Left colon (tissue), 2 donors: ENCODE measurements at regions of chr15 and their contacts with region 1.

Region 1: GRCh38 chr15:60358935-60359682 is 38.7 kb downstream of the ANXA2 start:
- DNase-seq: no peak
- ATAC-seq: no peak

Region 2: GRCh38 chr15:60162241-60162967 is 196.7 kb before region 1 on chr15:
- intact Hi-C with region 1: no loop called
- DNase-seq: no peak
- ATAC-seq: no peak

Region 3: DNA sequence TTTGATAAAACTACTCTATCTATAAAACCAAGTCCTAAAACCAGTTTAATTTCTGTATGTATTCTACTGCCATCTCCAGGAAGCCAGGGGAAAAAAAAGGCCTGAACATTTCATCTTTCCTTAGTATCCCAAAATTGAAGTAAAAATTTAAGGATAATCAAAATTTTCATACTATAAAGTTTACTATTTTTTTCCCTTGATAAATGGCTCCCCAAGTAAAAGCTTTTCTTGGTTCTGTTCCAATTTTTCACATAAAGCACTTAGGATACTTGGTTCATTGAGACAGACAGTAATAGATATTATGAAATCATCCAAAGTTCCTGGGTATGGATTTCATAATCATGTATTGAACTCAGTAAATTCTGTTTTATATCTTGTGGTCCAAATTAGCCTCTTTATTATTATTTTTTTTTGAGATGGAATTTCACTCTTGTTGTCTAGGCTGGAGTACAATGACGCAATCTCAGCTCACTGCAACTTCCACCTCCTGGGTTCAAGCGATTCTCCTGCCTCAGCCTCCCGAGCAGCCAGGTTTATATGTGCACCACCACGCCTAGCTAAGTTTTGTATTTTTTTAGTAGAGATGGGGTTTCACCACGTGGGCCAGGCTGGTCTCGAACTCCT is 85.3 kb after region 1 on chr15:
- intact Hi-C with region 1: loop called in 1 of 2 experiments (anchors 5 kb)
- DNase-seq: no peak
- ATAC-seq: no peak